ENCODE measurements at regions of chr2 and their contacts with region 1.

Region 1: GRCh38 chr2:60674524-60675165 is 81.4 kb upstream of the PAPOLG start:
- DNase-seq: peak; percentile 87
- H3K4me3 ChIP-seq: no peak overlapping the region; a peak in 1 of 4 replicates
- H3K27ac ChIP-seq: no peak overlapping the region
- H3K4me1 ChIP-seq: no peaks in the 10 kb centered on the region; a peak in 1 of 4 replicates
- H3K27me3 ChIP-seq: no peaks in the 10 kb centered on the region; the same call in 1 of the 2 replicates
- CTCF ChIP-seq: peak; percentile 86
- EP300 ChIP-seq: no peak
- RAD21 ChIP-seq: peak; percentile 76

Region 2: DNA sequence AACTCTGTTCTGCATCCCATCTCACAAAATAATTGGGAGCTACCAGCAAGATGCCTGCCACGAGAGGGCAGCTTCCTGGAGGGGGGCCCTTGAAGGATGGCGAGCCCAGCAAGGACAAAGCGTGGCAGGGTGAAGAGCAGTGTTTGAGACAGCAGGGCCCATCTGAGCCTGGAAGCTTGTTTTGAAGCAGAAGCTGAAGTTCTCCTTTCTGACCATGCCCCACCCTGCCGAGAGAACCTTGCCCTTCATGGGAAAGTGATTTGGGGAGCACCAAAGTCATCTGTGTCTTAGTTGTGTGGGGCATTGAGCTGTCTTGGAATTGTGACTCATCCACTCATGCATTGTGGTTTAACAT is 337.5 kb before region 1 on chr2:
- CTCF ChIA-PET with region 1: no interaction called
- POLR2A ChIA-PET with region 1: no interaction called
- DNase-seq: no peak
- H3K4me3 ChIP-seq: no peak overlapping the region
- H3K27ac ChIP-seq: no peak overlapping the region
- H3K4me1 ChIP-seq: no peaks in the 10 kb centered on the region
- H3K27me3 ChIP-seq: no peaks in the 10 kb centered on the region
- CTCF ChIP-seq: peak; percentile 31
- EP300 ChIP-seq: no peak
- RAD21 ChIP-seq: no peak

Region 3: DNA sequence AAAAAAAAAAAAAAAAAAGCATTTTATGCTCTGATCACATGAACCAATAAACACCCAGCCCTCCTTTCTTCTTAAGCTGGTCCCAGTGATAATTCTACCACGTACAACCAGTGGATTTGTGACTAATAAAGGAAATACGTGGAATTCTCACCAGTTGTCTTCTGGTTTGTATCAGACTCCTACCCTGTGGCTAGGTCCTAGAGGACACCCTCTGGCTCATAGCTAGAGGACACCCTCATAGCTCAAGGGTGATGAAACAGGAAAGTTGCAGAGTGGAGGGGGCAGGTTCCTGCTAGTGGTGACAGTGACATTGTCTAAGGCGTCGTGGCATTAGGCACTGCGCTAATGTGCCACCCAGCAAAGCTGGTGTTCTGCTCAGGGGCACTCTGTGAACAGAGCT is 289.0 kb before region 1 on chr2:
- CTCF ChIA-PET with region 1: no interaction called
- POLR2A ChIA-PET with region 1: no interaction called
- DNase-seq: no peak
- H3K4me3 ChIP-seq: no peak overlapping the region
- H3K27ac ChIP-seq: no peak overlapping the region
- H3K4me1 ChIP-seq: no peaks in the 10 kb centered on the region
- H3K27me3 ChIP-seq: no peaks in the 10 kb centered on the region; the same call in 1 of the 2 replicates
- CTCF ChIP-seq: no peak
- EP300 ChIP-seq: no peak
- RAD21 ChIP-seq: no peak

Region 4: DNA sequence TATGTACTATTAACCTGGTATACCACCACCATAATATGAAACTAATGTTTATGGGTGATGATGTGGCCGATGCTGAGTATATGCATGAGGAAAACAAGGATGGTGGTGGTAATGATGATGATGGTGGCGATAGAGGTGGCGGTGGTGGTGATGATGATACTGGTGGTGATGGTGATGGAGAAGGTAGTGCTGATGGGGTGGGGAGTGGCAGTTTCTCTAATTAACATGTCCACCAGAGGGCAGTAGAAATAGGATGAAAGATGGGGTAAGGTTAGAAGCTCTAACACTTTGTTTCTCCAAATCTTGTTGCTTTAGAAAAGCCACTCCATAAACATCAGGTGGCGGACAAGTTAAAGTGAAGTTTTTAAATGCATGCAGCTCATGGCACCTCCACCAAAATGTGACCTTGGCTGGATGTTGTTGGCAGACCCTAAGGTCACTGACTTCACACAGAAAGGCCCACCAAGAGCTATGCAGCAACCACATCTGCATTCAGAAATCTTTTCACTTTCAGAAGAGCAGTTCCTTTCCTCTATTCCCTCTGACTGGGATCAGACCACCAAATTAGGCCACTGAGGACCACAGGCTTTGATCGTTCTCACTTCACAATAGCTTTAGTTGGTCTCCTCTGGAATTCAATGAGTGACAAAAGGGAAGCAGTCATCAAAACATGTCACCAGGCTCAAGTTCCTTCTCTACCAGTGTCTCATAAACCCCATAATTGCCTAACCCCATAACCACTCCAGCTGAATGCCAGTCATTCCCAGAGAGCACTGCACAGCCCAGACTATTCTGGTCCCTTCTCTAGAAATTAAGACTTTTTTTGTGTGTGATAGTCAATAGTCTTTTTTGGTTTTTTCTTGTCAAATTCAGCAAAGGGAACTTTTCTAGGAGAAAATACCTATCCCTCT is 113.7 kb before region 1 on chr2:
- CTCF ChIA-PET with region 1: interaction called, 22 read pairs
- POLR2A ChIA-PET with region 1: no interaction called
- DNase-seq: no peak
- H3K4me3 ChIP-seq: no peak overlapping the region
- H3K27ac ChIP-seq: no peak overlapping the region
- H3K4me1 ChIP-seq: 0 out of 4 replicates have a peak, but pooled peaks cover 0 to 6% of the 10 kb centered on the region in 2 experiments
- H3K27me3 ChIP-seq: peaks cover 33% of the 10 kb centered on the region
- CTCF ChIP-seq: peak; percentile 66
- EP300 ChIP-seq: no peak
- RAD21 ChIP-seq: peak; percentile 50

Region 5: GRCh38 chr2:60641811-60642788 is 32.5 kb before region 1 on chr2:
- CTCF ChIA-PET with region 1: interaction called, 36 read pairs
- POLR2A ChIA-PET with region 1: no interaction called
- DNase-seq: peak; percentile 59
- H3K4me3 ChIP-seq: peak overlapping the region in 1 of 2 experiments; percentile 48; a peak in 1 of 4 replicates
- H3K27ac ChIP-seq: no peak overlapping the region
- H3K4me1 ChIP-seq: peaks cover 0 to 9% of the 10 kb centered on the region in 2 experiments; a peak in 2 of 4 replicates
- H3K27me3 ChIP-seq: no peaks in the 10 kb centered on the region; the same call in 1 of the 2 replicates
- CTCF ChIP-seq: peak; percentile 92
- EP300 ChIP-seq: peak in 1 of 2 experiments; percentile 57; a peak in 1 of 4 replicates
- RAD21 ChIP-seq: peak; percentile 44

Region 6: GRCh38 chr2:60659026-60659425 is 15.6 kb before region 1 on chr2:
- CTCF ChIA-PET with region 1: interaction called, 29 read pairs
- POLR2A ChIA-PET with region 1: no interaction called
- DNase-seq: no peak
- H3K4me3 ChIP-seq: no peak overlapping the region
- H3K27ac ChIP-seq: no peak overlapping the region
- H3K4me1 ChIP-seq: no peaks in the 10 kb centered on the region
- H3K27me3 ChIP-seq: no peaks in the 10 kb centered on the region; the same call in 1 of the 2 replicates
- CTCF ChIP-seq: no peak
- EP300 ChIP-seq: no peak
- RAD21 ChIP-seq: no peak

Region 7: GRCh38 chr2:60699617-60700016 is 25.0 kb after region 1 on chr2:
- CTCF ChIA-PET with region 1: interaction called, 13 read pairs
- POLR2A ChIA-PET with region 1: interaction called, 3 read pairs
- DNase-seq: no peak
- H3K4me3 ChIP-seq: no peak overlapping the region
- H3K27ac ChIP-seq: no peak overlapping the region
- H3K4me1 ChIP-seq: no peaks in the 10 kb centered on the region
- H3K27me3 ChIP-seq: no peaks in the 10 kb centered on the region
- CTCF ChIP-seq: no peak
- EP300 ChIP-seq: no peak
- RAD21 ChIP-seq: no peak